CD4-positive, alpha-beta T cell (primary cell): ENCODE measurements at regions of chr4 and their contacts with region 1.

Region 1: DNA sequence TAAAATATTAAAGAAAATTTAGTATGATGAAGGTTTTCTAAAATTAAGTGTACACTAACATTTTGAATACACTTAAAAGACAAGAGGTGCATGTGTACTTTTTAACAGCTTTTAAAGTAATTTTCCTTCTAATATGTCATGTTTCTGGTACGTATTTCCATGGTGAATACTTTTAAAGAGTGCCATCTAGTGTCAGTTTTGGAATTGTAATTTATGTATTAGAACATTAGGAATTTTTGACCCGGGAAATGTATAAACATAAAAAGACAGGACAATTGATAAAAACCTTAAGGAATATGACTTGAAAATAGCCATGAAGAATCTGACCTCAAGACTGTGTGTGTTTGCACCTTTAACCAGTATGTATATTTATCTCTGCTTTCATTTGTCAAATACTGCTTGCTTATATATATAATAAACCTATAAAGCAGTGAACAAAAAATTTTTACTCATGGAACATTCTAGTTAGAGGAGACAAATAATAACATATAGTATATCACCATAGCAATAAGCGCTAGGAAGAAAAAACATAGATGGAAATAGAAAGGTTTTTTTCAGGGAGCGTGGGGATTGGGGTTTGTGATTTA is 7.2 kb downstream of the GSTCD start:
- DNase-seq: peak in 3 of 14 experiments; percentile 36 to 49 (median 37)
- ATAC-seq: peak; percentile 34
- H3K4me3 ChIP-seq: no peak overlapping the region
- H3K4me3 Mint-ChIP-seq: no peak overlapping the region
- H3K27ac ChIP-seq: no peak overlapping the region
- H3K27ac Mint-ChIP-seq: no peak overlapping the region
- H3K4me1 ChIP-seq: no peaks in the 10 kb centered on the region
- H3K4me1 Mint-ChIP-seq: no peaks in the 10 kb centered on the region
- H3K27me3 ChIP-seq: no peaks in the 10 kb centered on the region
- H3K27me3 Mint-ChIP-seq: no peaks in the 10 kb centered on the region
- CTCF ChIP-seq: peak; percentile 76

Region 2: DNA sequence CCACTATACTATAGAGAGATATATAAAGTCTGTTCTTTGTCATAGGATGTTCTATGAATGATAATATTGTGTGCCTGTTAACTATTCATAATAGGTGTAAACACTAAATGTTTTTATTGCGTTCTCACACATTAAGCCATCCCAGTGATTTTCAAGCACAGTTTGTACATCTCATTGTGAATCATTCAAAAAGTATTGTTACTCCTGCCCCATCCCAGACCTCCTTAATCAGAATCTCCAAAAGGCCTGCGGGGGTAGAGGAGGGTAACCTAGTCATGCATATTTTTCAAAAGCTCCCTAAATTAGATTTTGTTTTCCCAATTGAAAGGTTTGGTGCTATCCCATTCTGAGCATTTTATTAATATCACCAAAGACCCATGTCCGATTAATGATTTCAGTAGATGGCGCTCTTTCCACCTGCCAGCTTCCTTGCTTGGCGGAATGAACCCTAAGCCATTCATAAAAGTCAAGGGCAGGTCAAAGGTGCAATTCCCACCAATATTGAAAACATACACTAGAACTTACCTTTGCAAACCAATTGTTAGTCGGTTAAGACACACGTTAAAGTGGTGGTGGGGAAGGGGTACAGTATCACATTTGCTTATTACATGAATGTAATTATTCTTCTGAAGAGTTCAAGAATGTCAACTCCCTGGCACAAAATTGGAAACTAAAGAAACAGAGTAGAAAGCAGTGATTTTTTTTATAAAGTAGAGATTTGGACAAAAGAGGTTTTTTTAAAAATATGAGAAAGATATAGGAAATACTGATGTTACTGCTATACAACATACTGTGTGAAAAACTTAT is 574.9 kb before region 1 on chr4:
- CTCF ChIA-PET with region 1: no interaction called
- POLR2A ChIA-PET with region 1: no interaction called
- intact Hi-C with region 1: loop called (anchors 2 to 10 kb)
- DNase-seq: peak in 9 of 14 experiments; percentile 17 to 79 (median 37)
- ATAC-seq: peak; percentile 52
- H3K4me3 ChIP-seq: no peak overlapping the region
- H3K4me3 Mint-ChIP-seq: no peak overlapping the region
- H3K27ac ChIP-seq: no peak overlapping the region
- H3K27ac Mint-ChIP-seq: no peak overlapping the region
- H3K4me1 ChIP-seq: peaks cover 5% of the 10 kb centered on the region
- H3K4me1 Mint-ChIP-seq: peaks cover 7% of the 10 kb centered on the region
- H3K27me3 ChIP-seq: peaks cover 0 to 3% of the 10 kb centered on the region in 2 experiments
- H3K27me3 Mint-ChIP-seq: no peaks in the 10 kb centered on the region
- CTCF ChIP-seq: peak; percentile 78

Region 3: GRCh38 chr4:105146276-105147015 is 569.3 kb before region 1 on chr4 and contains the start of gene TET2:
- CTCF ChIA-PET with region 1: no interaction called
- POLR2A ChIA-PET with region 1: no interaction called
- intact Hi-C with region 1: loop called (anchors 2 to 10 kb)
- DNase-seq: peak; percentile 56 to 92 (median 72)
- ATAC-seq: peak; percentile 85
- H3K4me3 ChIP-seq: peak within 1 kb of the TSS; percentile 72
- H3K4me3 Mint-ChIP-seq: peak within 1 kb of the TSS; percentile 99
- H3K27ac ChIP-seq: peak within 1 kb of the TSS; percentile 46 to 69
- H3K27ac Mint-ChIP-seq: peak within 1 kb of the TSS; percentile 98
- H3K4me1 ChIP-seq: peaks cover 8% of the 10 kb centered on the region
- H3K4me1 Mint-ChIP-seq: peaks cover 50% of the 10 kb centered on the region
- H3K27me3 ChIP-seq: no peaks in the 10 kb centered on the region
- H3K27me3 Mint-ChIP-seq: no peaks in the 10 kb centered on the region
- CTCF ChIP-seq: no peak
- total RNA-seq, gene TET2: 31.0 to 32.0 TPM

Region 4: GRCh38 chr4:105440890-105441289 is 274.9 kb before region 1 on chr4:
- CTCF ChIA-PET with region 1: no interaction called
- POLR2A ChIA-PET with region 1: no interaction called
- intact Hi-C with region 1: no loop called
- DNase-seq: no peak
- ATAC-seq: no peak
- H3K4me3 ChIP-seq: no peak overlapping the region
- H3K4me3 Mint-ChIP-seq: no peak overlapping the region
- H3K27ac ChIP-seq: no peak overlapping the region
- H3K27ac Mint-ChIP-seq: no peak overlapping the region
- H3K4me1 ChIP-seq: no peaks in the 10 kb centered on the region
- H3K4me1 Mint-ChIP-seq: no peaks in the 10 kb centered on the region
- H3K27me3 ChIP-seq: no peaks in the 10 kb centered on the region
- H3K27me3 Mint-ChIP-seq: no peaks in the 10 kb centered on the region
- CTCF ChIP-seq: no peak

Region 5: GRCh38 chr4:106738121-106738520 is 1022.3 kb after region 1 on chr4:
- CTCF ChIA-PET with region 1: no interaction called
- POLR2A ChIA-PET with region 1: no interaction called
- intact Hi-C with region 1: no loop called
- DNase-seq: no peak
- ATAC-seq: no peak
- H3K4me3 ChIP-seq: no peak overlapping the region
- H3K4me3 Mint-ChIP-seq: no peak overlapping the region
- H3K27ac ChIP-seq: no peak overlapping the region
- H3K27ac Mint-ChIP-seq: no peak overlapping the region
- H3K4me1 ChIP-seq: no peaks in the 10 kb centered on the region
- H3K4me1 Mint-ChIP-seq: no peaks in the 10 kb centered on the region
- H3K27me3 ChIP-seq: no peaks in the 10 kb centered on the region
- H3K27me3 Mint-ChIP-seq: no peaks in the 10 kb centered on the region
- CTCF ChIP-seq: no peak